ENCODE measurements at regions of chr2 and their contacts with region 1.

Region 1: GRCh38 chr2:63692002-63692606 is 103.3 kb downstream of the MDH1 start:
- DNase-seq: peak; percentile 39
- H3K4me3 ChIP-seq: no peak overlapping the region
- H3K27ac ChIP-seq: no peak overlapping the region
- H3K4me1 ChIP-seq: peaks cover 0 to 2% of the 10 kb centered on the region in 2 experiments; a peak in 1 of 4 replicates
- H3K27me3 ChIP-seq: no peaks in the 10 kb centered on the region
- CTCF ChIP-seq: peak; percentile 76
- EP300 ChIP-seq: no peak
- RAD21 ChIP-seq: peak; percentile 78

Region 2: GRCh38 chr2:63676135-63676534 is 16.0 kb before region 1 on chr2:
- CTCF ChIA-PET with region 1: interaction called, 19 read pairs
- POLR2A ChIA-PET with region 1: no interaction called
- DNase-seq: no peak
- H3K4me3 ChIP-seq: no peak overlapping the region
- H3K27ac ChIP-seq: no peak overlapping the region
- H3K4me1 ChIP-seq: no peaks in the 10 kb centered on the region
- H3K27me3 ChIP-seq: no peaks in the 10 kb centered on the region
- CTCF ChIP-seq: no peak
- EP300 ChIP-seq: no peak
- RAD21 ChIP-seq: no peak

Measured in SK-N-SH (cell line).